ENCODE measurements at regions of chr18 and their contacts with region 1.

Region 1: DNA sequence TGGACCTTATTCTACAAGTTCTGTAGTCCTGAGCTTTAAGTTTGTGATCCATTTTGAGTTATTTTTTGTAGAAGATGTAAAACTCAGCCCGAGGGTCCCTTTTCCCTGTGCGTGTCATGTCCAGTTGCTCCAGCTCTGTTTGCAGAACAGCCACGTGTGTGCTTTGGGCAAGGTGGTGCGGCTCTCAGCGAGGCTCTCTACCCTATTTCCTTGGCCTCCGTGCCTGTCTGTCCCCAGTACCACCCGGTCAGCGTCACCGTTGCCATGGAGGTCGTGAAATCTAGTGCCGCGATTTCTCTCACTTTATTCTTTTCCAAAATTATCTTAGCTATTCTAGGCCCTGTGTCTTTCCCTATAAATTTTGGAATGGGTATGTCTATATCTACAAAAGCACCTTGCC is 141.0 kb upstream of the CTDP1 start:
- DNase-seq: no peak
- ATAC-seq: no peak
- H3K4me3 ChIP-seq: no peak overlapping the region
- H3K4me3 Mint-ChIP-seq: no peak overlapping the region
- H3K27ac ChIP-seq: no peak overlapping the region
- H3K27ac Mint-ChIP-seq: no peak overlapping the region
- H3K4me1 ChIP-seq: no peaks in the 10 kb centered on the region
- H3K4me1 Mint-ChIP-seq: no peaks in the 10 kb centered on the region
- H3K27me3 ChIP-seq: no peaks in the 10 kb centered on the region
- H3K27me3 Mint-ChIP-seq: no peaks in the 10 kb centered on the region
- CTCF ChIP-seq: no peak

Region 2: DNA sequence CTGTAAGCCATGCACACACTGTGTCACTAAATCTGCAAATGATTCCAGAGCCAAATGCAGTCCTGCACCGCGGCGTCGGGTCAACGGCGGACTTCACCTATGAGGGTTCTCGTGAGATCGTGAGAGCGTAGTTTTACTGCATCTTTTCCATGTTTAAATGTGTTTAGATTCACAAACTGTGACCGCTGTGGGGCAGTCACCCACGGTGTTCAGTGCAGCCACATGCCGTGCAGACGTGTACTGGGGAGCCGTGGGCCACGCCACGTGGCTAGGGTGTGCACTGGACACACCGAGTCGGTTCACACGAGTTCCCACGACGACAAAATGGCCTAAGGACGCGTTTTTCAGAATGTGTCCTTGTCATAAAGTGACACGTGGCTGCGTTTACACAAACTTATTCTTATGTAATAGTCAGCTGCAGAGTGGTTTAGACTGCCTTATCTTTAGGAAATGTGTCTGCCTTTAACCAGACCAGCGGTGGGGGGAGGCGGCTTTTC is 108.8 kb before region 1 on chr18:
- CTCF ChIA-PET with region 1: no interaction called
- POLR2A ChIA-PET with region 1: no interaction called
- intact Hi-C with region 1: no loop called
- DNase-seq: no peak
- ATAC-seq: peak; percentile 36
- H3K4me3 ChIP-seq: no peak overlapping the region
- H3K4me3 Mint-ChIP-seq: no peak overlapping the region
- H3K27ac ChIP-seq: no peak overlapping the region
- H3K27ac Mint-ChIP-seq: peak overlapping the region; percentile 72
- H3K4me1 ChIP-seq: peaks cover 23% of the 10 kb centered on the region
- H3K4me1 Mint-ChIP-seq: peaks cover 39% of the 10 kb centered on the region
- H3K27me3 ChIP-seq: no peaks in the 10 kb centered on the region
- H3K27me3 Mint-ChIP-seq: no peaks in the 10 kb centered on the region
- CTCF ChIP-seq: no peak

Region 3: GRCh38 chr18:79484661-79485621 is 53.7 kb before region 1 on chr18:
- CTCF ChIA-PET with region 1: no interaction called
- POLR2A ChIA-PET with region 1: no interaction called
- intact Hi-C with region 1: loop called in 1 of 2 experiments (anchors 5 kb)
- DNase-seq: peak in 2 of 14 experiments; percentile 0
- ATAC-seq: no peak
- H3K4me3 ChIP-seq: no peak overlapping the region
- H3K4me3 Mint-ChIP-seq: no peak overlapping the region
- H3K27ac ChIP-seq: no peak overlapping the region
- H3K27ac Mint-ChIP-seq: no peak overlapping the region
- H3K4me1 ChIP-seq: peaks cover 4% of the 10 kb centered on the region
- H3K4me1 Mint-ChIP-seq: no peaks in the 10 kb centered on the region
- H3K27me3 ChIP-seq: no peaks in the 10 kb centered on the region
- H3K27me3 Mint-ChIP-seq: no peaks in the 10 kb centered on the region
- CTCF ChIP-seq: no peak

Region 4: GRCh38 chr18:79786786-79787526 is 248.3 kb after region 1 on chr18:
- CTCF ChIA-PET with region 1: no interaction called
- POLR2A ChIA-PET with region 1: no interaction called
- intact Hi-C with region 1: no loop called
- DNase-seq: no peak
- ATAC-seq: no peak
- H3K4me3 ChIP-seq: no peak overlapping the region
- H3K4me3 Mint-ChIP-seq: no peak overlapping the region
- H3K27ac ChIP-seq: no peak overlapping the region
- H3K27ac Mint-ChIP-seq: no peak overlapping the region
- H3K4me1 ChIP-seq: no peaks in the 10 kb centered on the region
- H3K4me1 Mint-ChIP-seq: peaks cover 8% of the 10 kb centered on the region
- H3K27me3 ChIP-seq: peaks cover 35 to 66% of the 10 kb centered on the region in 2 experiments
- H3K27me3 Mint-ChIP-seq: peaks cover 68% of the 10 kb centered on the region
- CTCF ChIP-seq: no peak

Region 5: DNA sequence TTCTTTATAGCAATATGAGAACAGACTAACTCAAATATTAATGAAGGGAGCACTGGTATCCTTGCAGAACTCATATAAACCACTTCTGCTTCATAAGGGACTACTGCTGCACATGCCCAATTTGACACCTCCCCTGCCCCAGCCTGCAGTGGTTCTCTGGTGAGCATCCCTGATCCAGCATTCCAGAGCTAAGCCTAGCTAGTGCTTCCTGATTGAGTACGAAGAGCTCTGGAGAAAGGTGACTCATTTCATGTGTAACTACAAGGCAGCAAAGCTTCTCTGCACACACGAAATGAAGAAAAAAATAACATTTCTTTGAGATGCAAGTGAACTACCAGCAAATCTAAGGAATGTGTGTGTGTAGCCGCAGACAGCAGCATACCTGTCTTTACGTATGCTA is 547.6 kb after region 1 on chr18:
- CTCF ChIA-PET with region 1: no interaction called
- POLR2A ChIA-PET with region 1: no interaction called
- intact Hi-C with region 1: no loop called
- DNase-seq: no peak
- ATAC-seq: no peak
- H3K4me3 ChIP-seq: no peak overlapping the region
- H3K4me3 Mint-ChIP-seq: no peak overlapping the region
- H3K27ac ChIP-seq: no peak overlapping the region
- H3K27ac Mint-ChIP-seq: no peak overlapping the region
- H3K4me1 ChIP-seq: no peaks in the 10 kb centered on the region
- H3K4me1 Mint-ChIP-seq: no peaks in the 10 kb centered on the region
- H3K27me3 ChIP-seq: peaks cover 0 to 4% of the 10 kb centered on the region in 2 experiments
- H3K27me3 Mint-ChIP-seq: peaks cover 7% of the 10 kb centered on the region
- CTCF ChIP-seq: no peak